Dendritic cell treated with granulocyte-macrophage colony-stimulating factor and Interleukin-4, amounts not matched to agents 40 ng/mL and 50 ng/mL, for 4 days (primary cell): ENCODE measurements at regions of chr4 and their contacts with region 1.

Region 1: GRCh38 chr4:174429668-174430410 is 92.4 kb downstream of the HPGD start:
- H3K4me3 Mint-ChIP-seq: no peak overlapping the region
- H3K27ac Mint-ChIP-seq: no peak overlapping the region
- H3K4me1 Mint-ChIP-seq: peaks cover 5% of the 10 kb centered on the region
- H3K27me3 Mint-ChIP-seq: no peaks in the 10 kb centered on the region

Region 2: DNA sequence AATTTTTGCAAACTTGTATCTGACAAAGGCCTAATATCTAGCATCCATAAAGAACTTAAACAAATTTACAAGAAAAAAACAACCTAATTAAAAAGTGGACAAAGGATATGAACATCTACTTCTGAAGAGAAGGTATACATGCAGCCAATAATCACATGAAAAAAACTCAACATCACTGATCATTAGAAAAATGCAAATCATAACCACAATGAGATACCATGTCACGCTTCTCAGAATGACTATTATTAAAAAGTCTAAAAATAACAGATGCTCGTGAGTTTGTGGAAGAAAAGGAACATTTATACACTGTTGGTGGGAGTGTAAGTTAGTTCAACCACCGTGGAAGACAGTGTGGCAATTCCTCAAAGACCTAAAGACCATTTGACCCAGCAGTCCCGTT is 122.1 kb before region 1 on chr4:
- intact Hi-C with region 1: no loop called
- H3K4me3 Mint-ChIP-seq: no peak overlapping the region
- H3K27ac Mint-ChIP-seq: no peak overlapping the region
- H3K4me1 Mint-ChIP-seq: no peaks in the 10 kb centered on the region
- H3K27me3 Mint-ChIP-seq: no peaks in the 10 kb centered on the region

Region 3: GRCh38 chr4:174357321-174357720 is 72.5 kb before region 1 on chr4:
- intact Hi-C with region 1: loop called (anchors 2 kb)
- H3K4me3 Mint-ChIP-seq: no peak overlapping the region
- H3K27ac Mint-ChIP-seq: no peak overlapping the region
- H3K4me1 Mint-ChIP-seq: peaks cover 5% of the 10 kb centered on the region
- H3K27me3 Mint-ChIP-seq: no peaks in the 10 kb centered on the region

Region 4: DNA sequence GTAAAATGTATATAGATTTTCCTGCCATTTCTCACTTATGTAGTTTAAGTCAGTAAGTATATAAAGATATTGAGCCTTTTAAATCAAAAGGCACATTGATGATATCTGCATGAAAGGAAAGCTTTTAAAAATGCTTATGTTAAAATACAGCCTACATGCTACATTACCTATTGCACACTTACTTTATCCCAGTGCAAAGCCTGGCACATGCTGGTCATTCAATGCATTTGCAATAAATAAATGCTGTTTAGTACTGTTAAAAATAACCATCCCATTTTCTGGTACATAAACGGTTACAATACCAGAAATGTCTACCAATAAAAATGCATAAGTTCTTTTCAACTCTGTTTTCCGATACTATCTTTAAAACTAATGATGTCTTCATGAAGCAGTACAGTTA is 1787.7 kb after region 1 on chr4:
- intact Hi-C with region 1: no loop called
- H3K4me3 Mint-ChIP-seq: no peak overlapping the region
- H3K27ac Mint-ChIP-seq: no peak overlapping the region
- H3K4me1 Mint-ChIP-seq: no peaks in the 10 kb centered on the region
- H3K27me3 Mint-ChIP-seq: no peaks in the 10 kb centered on the region